Aorta (tissue), 5 donors: ENCODE measurements at regions of chr7 and their contacts with region 1.

Region 1: GRCh38 chr7:64590971-64591370 is 28.1 kb upstream of the ZNF680 start:
- DNase-seq: no peak
- ATAC-seq: no peak
- H3K4me3 ChIP-seq: no peak overlapping the region
- H3K27ac ChIP-seq: no peak overlapping the region
- H3K4me1 ChIP-seq: no peaks in the 10 kb centered on the region
- H3K27me3 ChIP-seq: no peaks in the 10 kb centered on the region

Region 2: DNA sequence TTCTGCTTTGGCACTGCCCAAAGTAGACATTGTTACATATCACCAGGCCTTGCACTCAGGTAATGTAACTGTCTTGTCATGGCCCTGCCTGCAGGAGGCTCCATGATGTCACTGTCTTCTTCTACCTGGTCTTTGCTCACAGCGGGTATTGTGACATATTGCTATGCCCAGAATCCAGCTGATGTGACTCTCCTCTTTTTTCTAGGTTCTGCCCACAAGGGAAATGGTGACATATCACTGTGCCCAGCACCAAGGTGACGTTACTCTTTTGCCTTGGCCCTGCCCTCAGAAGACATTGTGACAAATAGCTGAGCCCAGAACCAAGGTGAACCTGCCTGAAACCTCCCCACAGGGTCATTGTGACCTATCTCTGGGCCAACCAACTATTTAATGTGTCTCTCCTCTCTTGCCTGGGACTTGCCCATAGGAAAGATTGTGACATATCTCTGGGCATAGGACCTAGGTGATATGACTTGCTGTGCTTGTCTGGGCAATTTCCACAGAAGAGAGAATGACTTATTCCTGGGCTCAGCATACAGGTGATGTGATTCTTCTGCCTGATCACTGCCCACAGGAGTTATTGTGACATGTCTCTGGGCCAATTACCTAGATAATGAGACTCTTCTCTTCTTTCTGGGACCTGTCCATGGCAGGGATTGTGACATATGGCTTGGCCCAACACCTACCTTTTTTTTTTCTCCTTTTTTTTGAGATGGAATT is 48.5 kb after region 1 on chr7:
- intact Hi-C with region 1: loop called in 1 of 2 experiments (anchors 5 kb)
- DNase-seq: no peak
- ATAC-seq: no peak
- H3K4me3 ChIP-seq: no peak overlapping the region
- H3K27ac ChIP-seq: no peak overlapping the region
- H3K4me1 ChIP-seq: no peaks in the 10 kb centered on the region
- H3K27me3 ChIP-seq: no peaks in the 10 kb centered on the region